Dorsolateral prefrontal cortex (tissue), 120 donors: ENCODE measurements at regions of chr1 and their contacts with region 1.

Region 1: GRCh38 chr1:66607458-66607857 is 73.5 kb downstream of the SGIP1 start:
- DNase-seq: no peak
- H3K4me3 ChIP-seq: no peak overlapping the region
- H3K27ac ChIP-seq: no peak overlapping the region
- H3K27me3 ChIP-seq: no peaks in the 10 kb centered on the region
- CTCF ChIP-seq: peak in 1 of 56 donors; percentile 8

Region 2: DNA sequence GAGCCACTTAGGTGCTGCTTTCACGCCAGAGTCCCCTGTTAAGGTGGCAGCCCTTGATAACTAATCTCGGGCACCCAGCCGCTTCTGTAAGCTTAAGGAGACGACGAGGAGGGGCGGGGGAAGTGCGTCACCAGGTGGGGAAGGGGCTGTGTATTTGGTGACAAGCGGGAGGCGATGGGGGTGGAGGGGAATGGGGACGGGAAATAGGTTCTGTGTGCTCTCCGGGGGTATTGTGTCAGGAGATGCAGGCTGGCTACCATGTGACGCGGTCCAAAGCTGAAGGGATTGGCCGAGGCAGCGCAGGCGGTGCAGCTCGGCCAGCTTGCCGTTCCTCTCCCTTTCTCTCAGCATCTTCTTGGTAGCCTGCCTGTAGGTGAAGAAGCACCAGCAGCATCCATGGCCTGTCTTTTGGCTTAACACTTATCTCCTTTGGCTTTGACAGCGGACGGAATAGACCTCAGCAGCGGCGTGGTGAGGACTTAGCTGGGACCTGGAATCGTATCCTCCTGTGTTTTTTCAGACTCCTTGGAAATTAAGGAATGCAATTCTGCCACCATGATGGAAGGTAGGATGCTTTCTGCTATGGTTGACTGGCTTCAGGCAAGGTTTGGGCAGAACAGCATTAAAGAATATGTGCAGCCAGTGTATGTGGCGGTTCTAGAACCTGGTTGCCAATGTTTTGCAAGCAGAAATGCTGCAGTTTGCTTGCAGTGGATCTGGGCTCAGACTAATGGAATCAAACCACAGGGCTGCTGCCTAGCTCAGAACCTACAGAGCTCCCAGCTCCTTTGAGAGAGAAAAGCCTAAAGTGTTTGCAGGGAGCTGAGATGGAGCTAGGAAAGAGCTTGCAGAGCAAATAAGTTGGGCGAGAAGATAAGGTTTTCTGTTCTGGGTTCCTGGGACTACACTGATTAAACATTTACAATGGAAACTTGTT is 73.4 kb before region 1 on chr1 and contains the start of gene SGIP1:
- intact Hi-C with region 1: no loop called
- DNase-seq: peak; percentile 73 to 94 (median 88)
- H3K4me3 ChIP-seq: peak within 1 kb of the TSS; percentile 42 to 90 (median 72)
- H3K27ac ChIP-seq: peak within 1 kb of the TSS; percentile 44 to 96 (median 92)
- H3K27me3 ChIP-seq: no peaks in the 10 kb centered on the region
- CTCF ChIP-seq: peak in 5 of 56 donors; percentile 7 to 20 (median 14)
- total RNA-seq, gene SGIP1: 106 to 187 (median 149) TPM

Region 3: GRCh38 chr1:66637146-66637545 is 29.7 kb after region 1 on chr1:
- intact Hi-C with region 1: no loop called
- DNase-seq: no peak
- H3K4me3 ChIP-seq: no peak overlapping the region
- H3K27ac ChIP-seq: no peak overlapping the region
- H3K27me3 ChIP-seq: no peaks in the 10 kb centered on the region
- CTCF ChIP-seq: no peak

Region 4: DNA sequence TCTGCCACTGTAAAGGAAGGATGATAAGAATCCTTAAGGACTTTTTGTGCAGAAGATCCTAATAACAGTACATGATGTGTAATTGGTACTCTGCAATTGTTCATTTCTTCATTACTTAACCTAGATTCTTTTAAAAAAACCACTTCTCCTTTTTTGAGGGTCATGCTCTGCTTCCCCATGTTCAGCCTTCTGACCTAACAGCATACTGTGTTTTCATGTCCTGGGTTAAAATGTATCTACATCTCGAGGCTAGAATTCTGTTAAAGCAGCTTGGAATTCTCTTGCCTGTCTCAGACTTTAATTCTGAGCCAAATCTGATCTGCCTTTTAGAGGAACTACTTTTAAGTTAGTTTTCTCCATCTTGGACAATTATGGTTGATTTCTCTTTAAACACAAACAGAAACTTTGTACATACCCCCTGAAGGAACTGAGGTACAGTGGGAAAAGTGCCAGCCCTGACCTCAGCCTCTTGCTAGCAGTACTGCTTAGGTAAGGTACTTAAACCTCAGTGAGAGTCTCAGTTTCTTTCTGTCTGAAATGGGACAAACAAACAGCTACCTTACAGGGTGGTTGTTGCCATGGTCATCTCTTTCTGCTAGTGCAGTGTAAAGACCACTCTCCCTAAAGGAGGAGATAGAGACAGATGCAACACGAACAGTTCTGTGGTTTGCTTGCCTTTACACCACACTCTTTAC is 41.6 kb after region 1 on chr1:
- intact Hi-C with region 1: loop called in 1 of 2 experiments (anchors 5 kb)
- DNase-seq: no peak
- H3K4me3 ChIP-seq: no peak overlapping the region
- H3K27ac ChIP-seq: no peak overlapping the region
- H3K27me3 ChIP-seq: no peaks in the 10 kb centered on the region
- CTCF ChIP-seq: no peak

Region 5: DNA sequence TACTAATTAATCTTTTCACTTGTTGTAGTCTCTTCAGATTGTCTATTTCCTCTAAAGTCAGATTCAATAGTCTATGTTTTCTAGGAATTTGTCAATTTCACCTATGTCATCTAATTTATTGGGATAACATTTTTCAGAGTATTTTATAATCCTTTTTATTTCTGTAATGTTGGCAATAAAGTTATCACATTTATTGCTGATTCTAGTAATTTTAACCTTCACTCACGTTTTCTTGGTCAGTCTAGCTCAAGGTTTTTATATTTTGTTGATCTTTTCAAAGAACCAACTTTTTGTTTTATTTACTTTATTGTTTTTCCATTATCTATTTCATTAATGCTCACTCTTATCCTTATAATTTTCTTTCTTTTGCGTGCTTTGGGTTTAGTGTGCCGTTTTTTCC is 1323.7 kb after region 1 on chr1:
- intact Hi-C with region 1: no loop called
- DNase-seq: no peak
- H3K4me3 ChIP-seq: no peak overlapping the region
- H3K27ac ChIP-seq: no peak overlapping the region
- H3K27me3 ChIP-seq: peaks cover 0 to 2% (median 0%) of the 10 kb centered on the region in 45 donors
- CTCF ChIP-seq: no peak